ENCODE measurements at regions of chr5 and their contacts with region 1.

Region 1: GRCh38 chr5:177431317-177432142 is 5.1 kb downstream of the GRK6 start:
- DNase-seq: peak; percentile 90
- ATAC-seq: peak; percentile 59
- H3K4me3 Mint-ChIP-seq: peak overlapping the region; percentile 97
- H3K27ac Mint-ChIP-seq: peak overlapping the region; percentile 93
- H3K4me1 Mint-ChIP-seq: peaks cover 76% of the 10 kb centered on the region
- H3K27me3 Mint-ChIP-seq: no peaks in the 10 kb centered on the region

Region 2: GRCh38 chr5:177035976-177036375 is 395.6 kb before region 1 on chr5:
- CTCF ChIA-PET with region 1: no interaction called
- POLR2A ChIA-PET with region 1: no interaction called
- DNase-seq: peak; percentile 25
- ATAC-seq: peak; percentile 77
- H3K4me3 Mint-ChIP-seq: no peak overlapping the region
- H3K27ac Mint-ChIP-seq: peak overlapping the region; percentile 54
- H3K4me1 Mint-ChIP-seq: peaks cover 21% of the 10 kb centered on the region
- H3K27me3 Mint-ChIP-seq: no peaks in the 10 kb centered on the region

Region 3: DNA sequence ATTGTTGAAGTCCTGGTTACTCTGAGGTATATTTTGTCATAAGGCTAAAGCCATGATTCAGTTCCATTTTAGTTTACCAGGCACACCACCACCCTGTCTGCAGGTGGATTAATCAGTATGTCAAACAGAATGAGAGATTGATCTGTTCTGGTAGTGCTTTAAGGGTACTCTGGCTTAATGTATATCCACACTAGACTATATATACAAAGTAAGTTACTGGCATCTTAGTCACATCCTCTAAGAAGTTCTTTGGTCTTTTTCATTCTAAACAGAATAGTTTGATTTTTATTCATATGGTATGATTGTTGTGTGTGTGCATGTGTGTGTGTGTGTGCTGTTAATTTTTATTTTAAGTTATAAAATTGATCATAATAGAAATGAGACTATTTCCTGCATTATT is 189.8 kb before region 1 on chr5:
- CTCF ChIA-PET with region 1: no interaction called
- POLR2A ChIA-PET with region 1: no interaction called
- DNase-seq: no peak
- ATAC-seq: no peak
- H3K4me3 Mint-ChIP-seq: no peak overlapping the region
- H3K27ac Mint-ChIP-seq: no peak overlapping the region
- H3K4me1 Mint-ChIP-seq: no peaks in the 10 kb centered on the region
- H3K27me3 Mint-ChIP-seq: no peaks in the 10 kb centered on the region

Region 4: DNA sequence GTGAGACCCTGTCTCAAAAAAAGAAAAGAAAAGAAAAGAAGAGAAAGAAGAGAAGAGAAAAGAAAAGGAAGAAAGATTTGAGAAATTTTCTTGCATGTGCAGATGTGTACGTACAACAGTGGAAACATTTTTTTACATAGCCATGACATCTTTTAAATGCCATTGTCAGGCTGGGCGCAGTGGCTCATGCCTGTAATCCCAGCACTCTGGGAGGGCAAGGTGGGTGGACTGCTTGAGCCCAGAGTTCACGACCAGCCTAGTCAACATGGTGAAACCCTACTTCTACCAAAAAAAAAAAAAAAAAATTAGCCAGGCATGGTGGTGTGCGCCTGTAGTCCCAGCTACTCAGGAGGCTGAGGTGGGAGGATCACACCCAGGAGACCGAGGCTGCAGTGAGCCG is 86.6 kb before region 1 on chr5:
- CTCF ChIA-PET with region 1: no interaction called
- POLR2A ChIA-PET with region 1: no interaction called
- DNase-seq: no peak
- ATAC-seq: no peak
- H3K4me3 Mint-ChIP-seq: no peak overlapping the region
- H3K27ac Mint-ChIP-seq: no peak overlapping the region
- H3K4me1 Mint-ChIP-seq: peaks cover 41% of the 10 kb centered on the region
- H3K27me3 Mint-ChIP-seq: no peaks in the 10 kb centered on the region

Region 5: GRCh38 chr5:177412603-177413233 is 18.8 kb before region 1 on chr5:
- CTCF ChIA-PET with region 1: interaction called, 10 read pairs
- POLR2A ChIA-PET with region 1: interaction called, 8 read pairs
- DNase-seq: no peak
- ATAC-seq: peak; percentile 38
- H3K4me3 Mint-ChIP-seq: peak overlapping the region; percentile 10
- H3K27ac Mint-ChIP-seq: peak overlapping the region; percentile 65
- H3K4me1 Mint-ChIP-seq: peaks cover 46% of the 10 kb centered on the region
- H3K27me3 Mint-ChIP-seq: no peaks in the 10 kb centered on the region

Region 6: GRCh38 chr5:177446200-177447065 is 14.9 kb after region 1 on chr5 and contains the start of gene PRR7:
- CTCF ChIA-PET with region 1: interaction called, 99 read pairs
- POLR2A ChIA-PET with region 1: interaction called, 245 read pairs
- DNase-seq: peak; percentile 79
- ATAC-seq: peak; percentile 74
- H3K4me3 Mint-ChIP-seq: peak within 1 kb of the TSS; percentile 70
- H3K27ac Mint-ChIP-seq: peak within 1 kb of the TSS; percentile 65
- H3K4me1 Mint-ChIP-seq: peaks cover 43% of the 10 kb centered on the region
- H3K27me3 Mint-ChIP-seq: peaks cover 6% of the 10 kb centered on the region
- total RNA-seq, gene PRR7: 9.8 to 11.6 TPM

Region 7: GRCh38 chr5:177620560-177620959 is 189.0 kb after region 1 on chr5:
- CTCF ChIA-PET with region 1: no interaction called
- POLR2A ChIA-PET with region 1: no interaction called
- DNase-seq: no peak
- ATAC-seq: no peak
- H3K4me3 Mint-ChIP-seq: no peak overlapping the region
- H3K27ac Mint-ChIP-seq: no peak overlapping the region
- H3K4me1 Mint-ChIP-seq: no peaks in the 10 kb centered on the region
- H3K27me3 Mint-ChIP-seq: no peaks in the 10 kb centered on the region

Measured in activated CD8-positive, alpha-beta T cell treated with anti-CD3 and anti-CD28 coated beads, Interleukin-2, amount 10 ng/mL, durations not matched to agents 7 days and 5 days (primary cell).